Activated T-helper 2 cell treated with anti-CD3 and anti-CD28 coated beads, Interferon-gamma antibody, Interleukin-2, Interleukin-4, amounts not matched to agents 10 μg/mL and 5 μg/mL and 100 μg/mL, durations not matched to agents 14 hours and 24 hours and 36 hours (primary cell): ENCODE measurements at regions of chr1 and their contacts with region 1.

Region 1: DNA sequence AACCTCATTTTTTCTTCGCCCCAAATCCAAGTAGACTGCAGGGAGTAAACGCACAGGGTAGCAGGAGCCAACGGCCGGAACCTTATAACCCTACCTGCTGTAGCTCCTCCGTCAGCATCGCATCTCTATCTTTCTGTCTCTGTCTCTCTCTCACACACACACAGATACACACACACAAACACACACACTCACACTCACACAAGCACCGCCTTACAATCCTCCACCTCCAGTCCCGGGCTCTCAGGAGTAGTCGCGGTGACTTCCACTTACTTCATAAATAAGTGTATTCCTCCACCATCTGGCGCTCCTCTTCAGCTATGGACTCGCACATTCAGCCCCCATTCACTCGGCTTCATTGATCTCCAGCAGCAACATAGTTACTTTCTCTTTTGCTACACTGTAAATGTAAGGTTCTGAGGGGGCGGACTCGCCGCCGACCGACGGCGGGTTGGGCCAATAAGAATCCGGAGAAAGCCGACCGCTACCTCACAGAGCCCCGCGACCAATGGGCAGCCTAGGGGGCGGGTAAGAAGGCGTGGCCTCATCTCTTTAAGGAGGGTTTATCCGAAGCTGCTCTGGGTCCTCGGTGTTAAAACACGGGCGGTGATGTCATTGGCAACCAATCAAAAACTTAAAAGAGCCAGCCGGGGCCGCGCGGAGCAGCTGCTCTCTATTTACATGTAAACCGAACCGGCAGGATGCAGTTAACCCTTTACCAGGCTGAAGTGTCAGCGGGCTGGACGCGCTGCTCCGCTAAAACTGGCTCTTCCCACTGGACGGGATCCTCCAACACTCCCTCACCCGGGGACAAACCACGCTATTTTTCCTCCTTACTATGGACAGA is at the start of gene DUSP10:
- DNase-seq: peak; percentile 99
- H3K4me3 Mint-ChIP-seq: no peak within 1 kb of the TSS
- H3K27ac Mint-ChIP-seq: peak within 1 kb of the TSS; percentile 78
- H3K4me1 Mint-ChIP-seq: peaks cover 33% of the 10 kb centered on the region
- H3K27me3 Mint-ChIP-seq: no peaks in the 10 kb centered on the region
- total RNA-seq, gene DUSP10: 21.0 and 21.7 TPM in 2 replicates

Region 2: DNA sequence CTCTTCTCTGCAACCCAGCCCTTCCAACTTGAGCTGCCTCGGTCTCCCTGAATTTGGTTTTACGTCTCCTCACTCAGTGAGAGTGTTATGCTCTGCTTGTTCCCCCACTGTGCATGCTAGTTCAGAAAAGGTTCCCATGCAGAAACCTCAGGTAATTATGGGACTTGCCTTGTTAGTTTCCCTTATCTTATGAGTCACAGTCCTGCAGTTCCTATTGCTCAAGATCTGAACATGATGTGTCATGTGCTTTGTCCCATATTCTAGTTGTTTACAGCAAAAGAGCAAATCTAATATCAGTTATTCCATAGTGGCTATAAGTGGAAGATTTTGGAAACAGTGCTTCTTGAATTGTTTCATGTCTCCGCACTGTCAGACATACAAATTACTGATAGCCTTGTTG is 74.4 kb before region 1 on chr1:
- intact Hi-C with region 1: loop called (anchors 5 kb)
- DNase-seq: no peak
- H3K4me3 Mint-ChIP-seq: no peak overlapping the region
- H3K27ac Mint-ChIP-seq: no peak overlapping the region
- H3K4me1 Mint-ChIP-seq: peaks cover 6% of the 10 kb centered on the region
- H3K27me3 Mint-ChIP-seq: peaks cover 23% of the 10 kb centered on the region

Region 3: GRCh38 chr1:221725735-221726672 is 15.9 kb before region 1 on chr1:
- intact Hi-C with region 1: loop called (anchors 1 kb)
- DNase-seq: no peak
- H3K4me3 Mint-ChIP-seq: peak overlapping the region; percentile 69
- H3K27ac Mint-ChIP-seq: peak overlapping the region; percentile 95
- H3K4me1 Mint-ChIP-seq: peaks cover 84% of the 10 kb centered on the region
- H3K27me3 Mint-ChIP-seq: no peaks in the 10 kb centered on the region

Region 4: DNA sequence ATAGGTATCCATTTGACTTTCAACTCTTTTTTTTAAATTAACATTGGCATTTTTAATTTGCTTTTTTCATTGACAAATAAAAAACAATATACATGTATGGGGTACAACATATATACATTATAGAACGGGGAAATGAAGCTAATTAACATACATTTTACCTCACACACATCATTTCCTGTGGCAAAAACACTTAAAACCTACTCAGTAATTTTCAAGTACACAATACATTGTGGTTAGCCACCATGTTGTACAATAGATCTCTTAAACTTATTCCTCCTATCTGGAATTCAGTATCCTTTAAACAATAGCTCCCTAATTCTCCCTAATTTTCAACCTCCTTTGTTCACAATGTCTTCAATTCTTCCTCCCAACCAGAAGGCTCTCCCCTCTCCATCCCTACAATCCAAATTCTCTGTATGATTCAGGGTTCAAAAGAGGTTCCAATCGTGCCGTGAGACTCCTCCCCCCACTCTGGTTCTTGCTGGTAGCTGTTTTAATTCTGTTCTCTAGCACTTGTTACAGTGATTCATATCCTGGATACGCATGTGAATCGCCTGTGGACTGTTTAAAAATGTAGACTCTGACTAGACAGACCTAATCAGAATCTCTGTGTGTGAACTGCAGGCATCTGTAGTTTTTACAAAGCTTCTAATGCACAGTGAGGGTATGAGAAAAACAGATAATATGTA is 87.5 kb after region 1 on chr1:
- intact Hi-C with region 1: loop called (anchors 1 kb)
- DNase-seq: peak; percentile 40
- H3K4me3 Mint-ChIP-seq: peak overlapping the region; percentile 67
- H3K27ac Mint-ChIP-seq: peak overlapping the region; percentile 97
- H3K4me1 Mint-ChIP-seq: peaks cover 70% of the 10 kb centered on the region
- H3K27me3 Mint-ChIP-seq: no peaks in the 10 kb centered on the region

Region 5: DNA sequence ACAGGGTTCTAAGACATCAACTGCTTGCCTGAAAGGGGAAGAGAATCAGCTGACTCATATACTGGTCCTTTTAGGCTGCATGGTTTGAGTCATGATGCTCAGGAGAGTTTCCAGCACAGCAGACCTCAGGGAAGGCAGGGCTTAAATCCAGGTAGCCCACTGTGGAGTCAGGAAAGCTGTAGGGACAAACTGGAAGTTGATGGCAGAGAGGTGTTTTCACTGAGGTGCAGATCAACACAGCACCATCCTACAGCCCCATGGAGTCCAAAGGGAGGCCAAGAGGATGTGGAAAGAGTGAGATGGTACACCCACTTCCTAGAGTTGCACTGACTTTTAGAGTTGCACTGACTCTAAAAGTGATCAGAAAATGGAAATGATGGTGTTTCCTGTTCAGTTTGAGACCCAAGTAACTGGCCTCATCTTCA is 252.4 kb after region 1 on chr1:
- intact Hi-C with region 1: loop called (anchors 1 kb)
- DNase-seq: peak; percentile 8
- H3K4me3 Mint-ChIP-seq: no peak overlapping the region
- H3K27ac Mint-ChIP-seq: peak overlapping the region; percentile 96
- H3K4me1 Mint-ChIP-seq: peaks cover 45% of the 10 kb centered on the region
- H3K27me3 Mint-ChIP-seq: no peaks in the 10 kb centered on the region

Region 6: DNA sequence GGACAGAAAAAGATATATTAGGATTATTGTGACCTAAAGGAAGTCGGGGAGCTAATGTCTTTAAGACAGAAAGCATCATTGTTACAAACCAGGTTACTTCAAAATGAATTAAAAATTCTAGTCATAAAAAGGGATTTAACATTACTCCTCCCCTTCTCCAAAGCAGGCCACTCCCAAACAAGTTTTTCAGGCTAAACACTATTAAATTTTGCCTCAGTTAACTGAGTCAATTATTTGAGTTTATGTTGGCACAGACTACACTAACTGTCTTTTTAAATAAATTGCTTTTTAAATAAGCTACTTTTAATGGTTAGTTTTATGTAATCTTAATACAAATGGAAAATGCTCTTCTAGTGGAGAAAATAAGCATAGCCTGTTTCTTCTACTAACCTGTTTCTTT is 394.9 kb after region 1 on chr1:
- intact Hi-C with region 1: no loop called
- DNase-seq: no peak
- H3K4me3 Mint-ChIP-seq: no peak overlapping the region
- H3K27ac Mint-ChIP-seq: no peak overlapping the region
- H3K4me1 Mint-ChIP-seq: no peaks in the 10 kb centered on the region
- H3K27me3 Mint-ChIP-seq: no peaks in the 10 kb centered on the region